Activated CD4-positive, alpha-beta T cell treated with anti-CD3 and anti-CD28 coated beads for 36 hours (primary cell): ENCODE measurements at regions of chr15 and their contacts with region 1.

Region 1: GRCh38 chr15:76951220-76951619 is 19.7 kb downstream of the RCN2 start:
- DNase-seq: no peak
- ATAC-seq: no peak
- H3K4me3 Mint-ChIP-seq: no peak overlapping the region
- H3K27ac Mint-ChIP-seq: peak overlapping the region; percentile 10
- H3K4me1 Mint-ChIP-seq: peaks cover 6% of the 10 kb centered on the region
- H3K27me3 Mint-ChIP-seq: no peaks in the 10 kb centered on the region

Region 2: DNA sequence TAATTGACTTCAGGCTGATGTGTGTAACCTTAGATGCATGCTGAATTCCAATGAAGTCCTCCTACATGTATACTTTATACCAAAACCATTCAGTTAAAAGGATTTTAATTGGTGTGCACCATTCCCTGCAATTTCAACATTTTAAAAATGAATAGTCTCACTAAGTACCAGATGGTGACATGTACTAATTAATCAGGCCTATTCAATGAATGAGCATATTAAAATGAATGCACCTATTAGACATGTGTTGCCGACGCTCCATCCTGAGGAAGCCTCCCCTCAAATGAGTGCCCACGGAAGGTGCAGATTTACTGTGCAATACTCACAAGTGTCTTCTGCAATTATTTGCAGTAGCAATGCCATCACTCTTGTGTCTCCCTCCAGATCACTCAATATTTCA is 244.4 kb after region 1 on chr15:
- CTCF ChIA-PET with region 1: no interaction called
- POLR2A ChIA-PET with region 1: no interaction called
- intact Hi-C with region 1: no loop called
- DNase-seq: no peak
- ATAC-seq: no peak
- H3K4me3 Mint-ChIP-seq: no peak overlapping the region
- H3K27ac Mint-ChIP-seq: no peak overlapping the region
- H3K4me1 Mint-ChIP-seq: no peaks in the 10 kb centered on the region
- H3K27me3 Mint-ChIP-seq: no peaks in the 10 kb centered on the region

Region 3: DNA sequence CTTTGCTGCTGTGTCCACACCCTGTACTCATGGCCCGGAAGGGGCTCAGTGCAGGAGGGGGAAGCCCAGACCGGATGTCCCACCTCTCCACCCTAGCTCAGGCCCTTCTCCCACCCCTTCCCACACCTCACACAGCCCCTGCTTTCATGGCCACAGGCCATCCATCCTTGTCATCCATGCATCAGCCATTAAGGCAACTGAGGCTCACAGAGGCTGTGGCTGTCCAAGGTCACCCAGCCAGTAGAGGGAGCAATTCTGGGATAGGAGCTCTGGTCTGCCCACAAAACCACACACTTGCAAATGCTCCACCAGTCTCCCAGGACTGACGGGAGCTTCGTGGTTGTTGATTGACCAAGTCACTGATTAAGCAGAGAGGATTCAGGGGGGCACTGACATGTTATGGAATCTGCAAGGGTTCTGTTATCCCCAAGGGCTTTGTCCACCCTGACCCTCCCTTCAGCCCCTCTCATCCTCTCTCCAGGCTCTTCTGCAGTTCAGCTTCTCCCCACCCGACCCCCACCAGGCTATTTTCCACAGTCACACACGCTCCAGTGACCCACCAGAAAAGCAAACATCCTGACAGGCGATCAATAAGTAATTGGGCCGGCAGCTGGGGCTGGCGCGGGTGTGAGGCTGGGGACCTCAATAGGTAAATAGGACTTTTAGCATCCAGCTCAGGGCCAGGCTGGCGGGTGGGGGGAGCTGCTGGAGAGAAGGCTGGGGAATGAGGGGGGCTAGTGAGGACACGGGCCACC is 666.4 kb after region 1 on chr15:
- CTCF ChIA-PET with region 1: no interaction called
- POLR2A ChIA-PET with region 1: interaction called, 12 read pairs
- intact Hi-C with region 1: no loop called
- DNase-seq: peak; percentile 30
- ATAC-seq: no peak
- H3K4me3 Mint-ChIP-seq: no peak overlapping the region
- H3K27ac Mint-ChIP-seq: no peak overlapping the region
- H3K4me1 Mint-ChIP-seq: no peaks in the 10 kb centered on the region
- H3K27me3 Mint-ChIP-seq: no peaks in the 10 kb centered on the region